Vagina (tissue), 2 donors: ENCODE measurements at regions of chr17 and their contacts with region 1.

Region 1: GRCh38 chr17:40615295-40615988 is 32.2 kb downstream of the SMARCE1 start:
- DNase-seq: no peak
- H3K4me3 ChIP-seq: no peak overlapping the region
- H3K27ac ChIP-seq: no peak overlapping the region
- H3K4me1 ChIP-seq: peaks cover 8% of the 10 kb centered on the region
- H3K27me3 ChIP-seq: no peaks in the 10 kb centered on the region
- CTCF ChIP-seq: peak in 2 of 3 experiments; percentile 14 to 41
- POLR2A ChIP-seq: no peak

Region 2: DNA sequence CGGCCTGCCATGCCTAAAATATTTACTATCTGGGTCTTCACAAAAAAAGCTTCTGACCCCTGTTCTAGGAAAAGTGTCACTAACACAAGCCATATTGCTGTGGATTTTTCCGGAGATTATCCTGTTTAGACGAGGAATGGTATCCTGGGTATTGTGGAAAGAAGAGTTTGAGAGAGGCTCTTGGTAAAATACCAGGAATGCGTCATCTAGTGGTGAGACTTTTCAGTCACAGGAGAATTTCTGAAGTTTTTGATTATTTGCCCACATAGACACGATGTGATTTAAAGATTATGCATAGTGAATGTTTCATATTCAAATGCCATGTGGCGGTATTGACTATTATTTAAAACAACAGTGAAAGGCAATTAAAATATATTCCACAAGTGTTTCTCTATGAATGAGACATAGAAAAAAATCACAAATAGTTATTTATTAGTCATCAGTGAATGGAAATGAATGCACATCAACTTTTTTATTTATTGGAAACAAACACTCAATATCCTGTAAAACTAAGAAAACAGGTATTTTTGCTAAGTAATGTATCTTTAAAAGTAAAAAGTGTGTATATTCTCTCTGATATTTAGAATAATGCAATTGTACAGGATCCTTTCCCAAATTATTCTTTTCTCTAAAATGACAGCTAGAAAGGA is 176.5 kb after region 1 on chr17:
- intact Hi-C with region 1: loop called (anchors 10 kb)
- DNase-seq: no peak
- H3K4me3 ChIP-seq: no peak overlapping the region
- H3K27ac ChIP-seq: no peak overlapping the region
- H3K4me1 ChIP-seq: no peaks in the 10 kb centered on the region
- H3K27me3 ChIP-seq: no peaks in the 10 kb centered on the region
- CTCF ChIP-seq: peak; percentile 21 to 53 (median 51)
- POLR2A ChIP-seq: no peak